ENCODE measurements at regions of chr4 and their contacts with region 1.

Region 1: DNA sequence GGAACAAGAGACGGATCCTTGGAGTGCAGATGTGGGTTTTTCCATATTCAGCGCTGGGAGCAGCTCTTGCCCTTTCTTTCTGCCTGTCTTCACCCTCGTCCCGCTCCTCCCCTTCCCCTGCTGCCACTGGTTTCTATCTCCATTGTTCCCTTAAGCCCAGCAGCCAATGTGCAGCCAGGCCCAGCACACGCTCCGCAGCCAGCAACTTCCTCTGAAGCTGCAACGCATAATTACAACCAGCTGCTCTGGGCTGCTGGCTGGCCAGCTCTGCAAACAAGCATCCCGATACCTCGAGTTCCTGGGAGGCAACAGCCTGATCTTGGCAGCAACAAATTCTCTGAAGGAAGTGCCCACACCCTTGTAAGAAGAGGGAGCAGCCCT is 83.6 kb upstream of the MAML3 start:
- DNase-seq: peak; percentile 78
- H3K4me3 ChIP-seq: peak overlapping the region in 1 of 2 donors; percentile 34
- H3K27ac ChIP-seq: peak overlapping the region; percentile 75 to 79
- H3K4me1 ChIP-seq: peaks cover 27% of the 10 kb centered on the region
- H3K27me3 ChIP-seq: no peaks in the 10 kb centered on the region
- CTCF ChIP-seq: no peak
- POLR2A ChIP-seq: no peak

Region 2: GRCh38 chr4:140176735-140177134 is 60.9 kb before region 1 on chr4:
- intact Hi-C with region 1: loop called (anchors 10 kb)
- DNase-seq: no peak
- H3K4me3 ChIP-seq: no peak overlapping the region
- H3K27ac ChIP-seq: no peak overlapping the region
- H3K4me1 ChIP-seq: no peaks in the 10 kb centered on the region
- H3K27me3 ChIP-seq: no peaks in the 10 kb centered on the region
- CTCF ChIP-seq: no peak
- POLR2A ChIP-seq: no peak

Measured in testis (tissue), 5 donors.